Endothelial cell of umbilical vein (primary cell): ENCODE measurements at regions of chr2 and their contacts with region 1.

Region 1: GRCh38 chr2:40273734-40274182 is 178.1 kb downstream of the SLC8A1 start:
- DNase-seq: no peak
- H3K4me3 ChIP-seq: no peak overlapping the region
- H3K27ac ChIP-seq: no peak overlapping the region
- H3K4me1 ChIP-seq: no peaks in the 10 kb centered on the region
- H3K27me3 ChIP-seq: no peaks in the 10 kb centered on the region
- CTCF ChIP-seq: no peak
- POLR2A ChIP-seq: no peak

Region 2: GRCh38 chr2:39902103-39902502 is 371.7 kb before region 1 on chr2:
- CTCF ChIA-PET with region 1: no interaction called
- POLR2A ChIA-PET with region 1: no interaction called
- dilution Hi-C with region 1: no loop called
- intact Hi-C with region 1: no loop called
- DNase-seq: no peak
- H3K4me3 ChIP-seq: no peak overlapping the region
- H3K27ac ChIP-seq: no peak overlapping the region
- H3K4me1 ChIP-seq: peaks cover 4% of the 10 kb centered on the region
- H3K27me3 ChIP-seq: peaks cover 1 to 5% of the 10 kb centered on the region in 2 experiments
- CTCF ChIP-seq: no peak
- POLR2A ChIP-seq: no peak

Region 3: DNA sequence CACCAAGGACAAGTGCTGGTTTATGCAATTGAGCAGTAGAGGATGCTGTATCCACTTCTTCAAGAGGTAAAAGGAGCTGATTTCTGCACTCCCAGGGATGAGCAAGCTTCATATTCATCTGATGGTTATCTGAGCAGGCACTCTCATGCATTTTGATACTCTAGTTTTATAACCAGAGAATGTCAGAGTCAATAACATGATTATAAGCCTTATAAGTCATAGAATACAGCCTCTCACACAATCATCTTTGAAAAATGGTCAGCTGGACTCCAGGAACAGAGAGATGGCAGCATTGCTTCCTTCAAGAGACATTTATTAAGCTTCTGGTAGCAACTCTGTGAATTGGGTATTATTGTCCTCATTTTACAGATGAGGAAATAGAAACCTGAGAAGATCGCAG is 11.0 kb after region 1 on chr2:
- CTCF ChIA-PET with region 1: interaction called, 11 read pairs
- POLR2A ChIA-PET with region 1: no interaction called
- dilution Hi-C with region 1: no loop called
- intact Hi-C with region 1: no loop called
- DNase-seq: no peak
- H3K4me3 ChIP-seq: no peak overlapping the region
- H3K27ac ChIP-seq: no peak overlapping the region
- H3K4me1 ChIP-seq: no peaks in the 10 kb centered on the region
- H3K27me3 ChIP-seq: no peaks in the 10 kb centered on the region
- CTCF ChIP-seq: no peak
- POLR2A ChIP-seq: no peak